Right ventricle myocardium superior (tissue), 1 donor: ENCODE measurements at regions of chr18 and their contacts with region 1.

Region 1: DNA sequence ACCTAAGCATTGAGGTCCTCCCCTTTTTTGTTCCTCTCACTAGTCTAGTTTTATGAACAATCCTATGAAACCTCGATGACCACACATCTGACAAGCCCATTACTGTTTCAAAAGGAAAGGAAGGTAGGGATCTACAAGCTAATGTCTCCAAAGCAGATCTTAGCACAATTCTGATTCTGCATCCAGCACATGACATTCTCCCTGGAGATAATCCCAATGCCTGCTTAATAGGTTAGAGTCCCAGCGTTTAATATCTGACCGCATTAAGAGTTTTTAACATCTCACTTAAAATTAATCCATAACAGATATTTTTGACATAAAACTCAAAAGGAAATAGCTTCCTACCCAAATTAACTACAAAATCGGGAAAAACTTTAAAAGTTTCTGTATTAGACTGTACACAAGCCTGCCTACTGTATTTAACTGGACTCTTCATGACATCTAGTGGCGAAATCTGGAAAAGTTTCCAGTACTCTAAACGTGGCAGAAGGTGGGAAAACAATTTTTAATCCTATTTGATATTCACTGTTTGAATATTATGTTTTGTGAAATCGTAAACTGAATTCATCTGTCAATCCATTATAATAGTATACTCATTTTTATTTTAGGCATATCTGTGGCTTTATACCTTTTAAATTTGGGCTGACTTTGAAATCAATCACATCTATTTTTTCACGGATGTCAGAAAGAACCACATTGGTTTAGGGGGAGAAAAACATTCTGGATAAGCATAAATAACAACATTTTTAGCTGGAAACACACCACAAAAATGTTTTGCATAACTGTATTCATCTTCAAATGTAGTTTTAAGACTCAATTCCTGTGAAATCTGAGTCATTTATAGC is 62.4 kb downstream of the TXNL1 start:
- DNase-seq: no peak
- ATAC-seq: peak; percentile 93

Region 2: DNA sequence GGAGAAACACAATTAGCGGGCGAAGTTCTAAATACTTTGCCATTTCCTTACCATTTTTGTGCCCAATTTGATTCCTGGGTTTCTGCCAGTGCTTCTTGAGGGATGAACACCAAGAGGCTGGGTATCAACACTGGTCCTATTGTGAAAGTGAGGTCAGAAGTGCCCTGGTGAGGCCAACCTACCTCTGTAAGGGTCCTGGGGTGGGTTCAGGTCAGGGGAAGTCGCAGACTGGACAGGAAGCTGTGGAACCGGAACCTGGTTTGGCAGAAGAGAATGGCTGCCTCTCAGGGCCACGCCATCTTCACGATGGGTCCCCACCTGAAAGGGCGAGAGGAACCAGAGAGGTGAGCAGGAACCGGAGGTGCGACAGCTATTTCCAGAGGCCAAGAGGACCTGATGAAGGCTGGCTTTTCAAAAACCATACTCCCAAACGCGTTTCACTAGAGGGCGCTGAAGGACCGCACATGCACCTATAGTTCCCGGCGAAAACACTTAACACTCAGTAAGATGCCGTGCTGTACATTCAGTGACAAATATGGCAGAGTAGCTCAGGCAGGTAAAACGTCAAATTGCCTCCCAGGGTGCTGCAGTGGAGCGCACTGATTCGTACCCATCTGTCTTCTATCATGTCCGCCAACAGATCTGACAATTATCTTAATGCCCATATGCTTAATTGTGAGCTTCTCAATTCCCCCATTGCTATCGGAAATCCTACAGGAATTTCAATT is 1341.5 kb before region 1 on chr18:
- intact Hi-C with region 1: loop called (anchors 10 kb)
- DNase-seq: peak; percentile 78
- ATAC-seq: peak; percentile 90

Region 3: GRCh38 chr18:55415258-55415871 is 1160.7 kb before region 1 on chr18:
- intact Hi-C with region 1: loop called (anchors 5 kb)
- DNase-seq: peak; percentile 93
- ATAC-seq: peak; percentile 93

Region 4: DNA sequence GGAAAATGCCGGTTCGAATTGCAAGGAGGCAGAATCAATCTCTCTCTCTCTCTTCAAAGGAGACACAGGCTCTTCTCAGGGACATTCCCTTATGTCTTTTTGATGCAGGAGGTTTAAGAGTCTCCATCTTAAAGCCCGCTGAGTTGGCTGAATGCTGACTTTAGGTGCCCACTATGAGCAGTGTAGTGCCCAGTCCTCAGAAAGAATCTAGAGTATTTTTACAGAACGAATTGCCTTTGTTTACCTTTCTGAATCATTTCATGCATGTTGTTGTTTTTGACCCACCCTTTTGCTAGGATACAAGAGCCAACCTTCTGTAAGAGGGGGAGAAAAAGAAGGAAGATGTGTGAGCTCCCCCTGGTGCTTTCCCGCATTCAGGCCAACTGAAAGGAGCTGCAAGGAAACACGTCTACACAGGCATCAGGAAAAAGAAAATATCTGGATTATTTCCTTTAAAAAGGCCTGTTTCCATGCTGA is 794.5 kb before region 1 on chr18:
- intact Hi-C with region 1: loop called (anchors 10 kb)
- DNase-seq: peak; percentile 50
- ATAC-seq: peak; percentile 62

Region 5: GRCh38 chr18:55861266-55861665 is 714.8 kb before region 1 on chr18:
- intact Hi-C with region 1: loop called (anchors 10 kb)
- DNase-seq: no peak
- ATAC-seq: peak; percentile 23

Region 6: GRCh38 chr18:56541793-56542192 is 34.2 kb before region 1 on chr18:
- intact Hi-C with region 1: no loop called
- DNase-seq: no peak
- ATAC-seq: no peak